Activated T-helper 1 cell treated with anti-CD3 and anti-CD28 coated beads, Interleukin-12 subunit alpha, Interleukin-12 subunit beta, Interleukin-2, Interleukin-4 antibody, amounts not matched to agents 30 ng/mL and 10 ng/mL and 1 ng/mL, durations not matched to agents 14 hours and 24 hours and 36 hours (primary cell): ENCODE measurements at regions of chr4 and their contacts with region 1.

Region 1: DNA sequence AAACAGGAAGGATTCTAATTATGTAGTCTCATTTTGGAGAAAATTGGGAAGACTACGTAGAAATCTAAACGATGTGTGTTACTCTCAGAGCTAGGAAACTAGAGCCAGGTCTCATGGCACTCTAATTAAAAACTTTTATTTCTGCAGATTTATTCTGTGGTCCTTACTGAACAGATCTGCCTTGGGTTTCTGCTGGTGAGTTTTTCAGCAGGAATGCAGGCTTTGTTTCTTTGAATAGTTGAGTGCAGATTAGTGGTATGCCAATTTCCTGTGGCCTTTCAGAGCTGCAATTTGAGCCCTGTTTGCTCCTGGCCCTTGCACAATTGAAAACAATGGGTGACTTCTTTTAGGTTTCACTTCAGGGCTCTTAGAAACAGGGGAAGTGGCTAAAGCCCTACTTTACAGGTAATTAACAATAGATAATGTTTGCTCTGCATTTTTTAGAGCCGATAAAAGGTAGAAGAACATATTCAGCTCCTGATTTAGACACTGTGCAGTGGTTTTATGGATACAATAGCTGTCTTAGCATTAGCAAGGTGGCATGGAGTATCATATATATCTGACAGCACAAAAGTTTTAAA is 21.8 kb downstream of the SPRY1 start:
- DNase-seq: no peak
- H3K4me3 Mint-ChIP-seq: peak overlapping the region; percentile 25
- H3K27ac Mint-ChIP-seq: peak overlapping the region; percentile 64
- H3K4me1 Mint-ChIP-seq: peaks cover 82% of the 10 kb centered on the region
- H3K27me3 Mint-ChIP-seq: no peaks in the 10 kb centered on the region

Region 2: DNA sequence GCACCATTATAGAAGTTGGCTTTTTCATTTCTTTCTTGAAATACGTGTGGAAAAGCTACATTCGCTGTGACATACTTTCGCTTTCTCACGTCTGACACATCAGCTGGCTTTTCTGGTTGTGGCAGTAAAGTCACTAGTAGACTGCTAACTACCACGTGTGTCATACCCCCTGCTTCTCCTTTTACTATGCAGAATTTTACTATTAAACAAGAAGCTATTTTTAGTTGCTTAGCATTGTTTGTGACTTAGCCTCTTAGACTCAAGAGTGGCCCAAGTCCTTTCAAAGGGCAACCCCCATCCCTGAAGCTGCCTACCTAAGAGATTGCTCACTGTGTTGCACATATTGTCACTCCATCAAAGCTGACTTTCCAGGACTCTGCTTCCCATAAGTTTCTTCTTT is 959.8 kb before region 1 on chr4:
- intact Hi-C with region 1: loop called (anchors 10 kb)
- DNase-seq: peak; percentile 29
- H3K4me3 Mint-ChIP-seq: peak overlapping the region; percentile 76
- H3K27ac Mint-ChIP-seq: peak overlapping the region; percentile 87
- H3K4me1 Mint-ChIP-seq: peaks cover 46% of the 10 kb centered on the region
- H3K27me3 Mint-ChIP-seq: no peaks in the 10 kb centered on the region

Region 3: DNA sequence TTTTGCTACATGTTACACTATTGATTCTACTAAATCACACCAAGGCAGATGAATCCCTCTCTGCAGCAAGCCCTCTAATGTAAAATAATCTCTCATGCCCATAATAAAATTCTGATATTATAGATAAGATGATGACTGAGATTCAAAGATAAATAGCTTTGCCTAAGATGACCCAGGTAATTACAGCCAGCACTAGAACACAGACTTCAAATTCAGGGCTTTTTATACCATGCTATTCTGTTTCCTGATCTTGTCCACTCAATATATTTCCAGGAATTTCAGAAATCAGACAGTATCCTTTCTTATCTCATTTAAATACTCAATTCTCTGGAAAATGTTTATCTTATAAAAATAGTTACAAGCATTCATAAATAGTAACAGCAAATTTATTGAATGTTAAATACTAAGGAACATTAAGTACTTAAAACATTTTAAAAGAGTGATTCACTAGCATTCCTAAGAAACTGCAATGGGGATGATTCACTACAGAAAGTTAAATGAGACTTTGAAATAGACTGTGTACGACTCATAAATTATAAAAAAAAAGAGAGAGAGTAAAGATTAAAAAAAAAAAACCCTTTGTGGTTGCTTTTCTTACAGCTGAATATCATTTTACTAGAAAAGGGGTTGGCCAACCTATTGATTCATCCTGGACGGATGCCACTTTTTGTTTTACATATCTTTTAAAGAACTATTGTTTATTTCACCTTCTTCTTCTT is 751.8 kb before region 1 on chr4:
- intact Hi-C with region 1: loop called (anchors 10 kb)
- DNase-seq: no peak
- H3K4me3 Mint-ChIP-seq: peak overlapping the region; percentile 69
- H3K27ac Mint-ChIP-seq: peak overlapping the region; percentile 74
- H3K4me1 Mint-ChIP-seq: peaks cover 88% of the 10 kb centered on the region
- H3K27me3 Mint-ChIP-seq: no peaks in the 10 kb centered on the region

Region 4: GRCh38 chr4:123477711-123478209 is 59.3 kb after region 1 on chr4:
- intact Hi-C with region 1: loop called (anchors 5 kb)
- DNase-seq: peak; percentile 67
- H3K4me3 Mint-ChIP-seq: peak overlapping the region; percentile 56
- H3K27ac Mint-ChIP-seq: peak overlapping the region; percentile 89
- H3K4me1 Mint-ChIP-seq: peaks cover 55% of the 10 kb centered on the region
- H3K27me3 Mint-ChIP-seq: no peaks in the 10 kb centered on the region

Region 5: DNA sequence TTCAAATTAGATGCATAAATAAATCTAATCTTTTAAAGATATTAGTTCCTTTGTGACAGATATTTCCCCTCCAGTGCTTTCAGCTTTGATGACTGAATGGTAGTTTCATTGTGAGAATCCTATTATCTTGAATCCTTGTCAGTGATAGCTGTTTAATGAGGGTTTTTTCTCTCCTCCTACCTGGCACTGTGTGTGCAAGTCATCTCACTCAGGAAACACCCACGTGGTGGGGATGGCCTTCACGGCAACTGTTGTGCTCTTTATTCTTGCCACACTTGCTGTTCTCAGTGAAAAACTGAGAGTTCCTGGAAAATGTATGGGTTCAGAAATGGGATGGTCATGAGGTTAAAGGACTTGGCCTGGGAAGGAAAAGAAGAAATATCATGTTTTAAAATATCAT is 108.1 kb after region 1 on chr4:
- intact Hi-C with region 1: loop called (anchors 2 kb)
- DNase-seq: no peak
- H3K4me3 Mint-ChIP-seq: no peak overlapping the region
- H3K27ac Mint-ChIP-seq: peak overlapping the region; percentile 46
- H3K4me1 Mint-ChIP-seq: peaks cover 15% of the 10 kb centered on the region
- H3K27me3 Mint-ChIP-seq: peaks cover 9% of the 10 kb centered on the region

Region 6: DNA sequence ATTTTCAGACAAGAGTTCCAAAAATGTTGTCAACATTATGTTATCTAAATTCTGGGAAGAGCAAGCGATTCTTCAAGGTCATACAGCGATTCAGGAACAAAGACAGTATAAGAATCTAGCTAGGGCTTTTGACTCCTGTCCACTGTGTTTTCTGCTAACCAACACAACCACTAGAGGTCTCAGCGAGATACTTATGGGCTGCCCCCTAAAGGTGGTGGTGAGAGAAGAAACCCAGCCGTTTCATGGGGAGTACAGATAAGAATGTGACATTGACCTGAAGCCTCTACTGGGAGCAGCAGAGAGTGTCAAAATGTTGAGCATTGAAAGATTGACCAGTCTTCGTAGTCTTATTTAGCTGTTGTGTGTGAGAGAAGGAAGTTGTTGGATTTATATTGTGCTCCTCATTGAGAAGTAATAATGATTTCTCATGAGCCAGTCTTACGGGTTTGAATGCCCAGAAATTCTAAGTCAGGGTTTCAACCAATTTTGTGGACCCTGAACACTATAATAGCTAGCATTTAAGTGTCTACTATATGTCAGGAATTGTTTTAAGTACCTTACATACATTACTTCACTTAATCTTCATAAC is 146.4 kb after region 1 on chr4:
- intact Hi-C with region 1: no loop called
- DNase-seq: peak; percentile 57
- H3K4me3 Mint-ChIP-seq: no peak overlapping the region
- H3K27ac Mint-ChIP-seq: no peak overlapping the region
- H3K4me1 Mint-ChIP-seq: peaks cover 7% of the 10 kb centered on the region
- H3K27me3 Mint-ChIP-seq: peaks cover 22% of the 10 kb centered on the region